ENCODE measurements at regions of chr19 and their contacts with region 1.

Region 1: GRCh38 chr19:50368649-50369570 is 3.5 kb upstream of the NAPSA start:
- DNase-seq: peak; percentile 92

Region 2: DNA sequence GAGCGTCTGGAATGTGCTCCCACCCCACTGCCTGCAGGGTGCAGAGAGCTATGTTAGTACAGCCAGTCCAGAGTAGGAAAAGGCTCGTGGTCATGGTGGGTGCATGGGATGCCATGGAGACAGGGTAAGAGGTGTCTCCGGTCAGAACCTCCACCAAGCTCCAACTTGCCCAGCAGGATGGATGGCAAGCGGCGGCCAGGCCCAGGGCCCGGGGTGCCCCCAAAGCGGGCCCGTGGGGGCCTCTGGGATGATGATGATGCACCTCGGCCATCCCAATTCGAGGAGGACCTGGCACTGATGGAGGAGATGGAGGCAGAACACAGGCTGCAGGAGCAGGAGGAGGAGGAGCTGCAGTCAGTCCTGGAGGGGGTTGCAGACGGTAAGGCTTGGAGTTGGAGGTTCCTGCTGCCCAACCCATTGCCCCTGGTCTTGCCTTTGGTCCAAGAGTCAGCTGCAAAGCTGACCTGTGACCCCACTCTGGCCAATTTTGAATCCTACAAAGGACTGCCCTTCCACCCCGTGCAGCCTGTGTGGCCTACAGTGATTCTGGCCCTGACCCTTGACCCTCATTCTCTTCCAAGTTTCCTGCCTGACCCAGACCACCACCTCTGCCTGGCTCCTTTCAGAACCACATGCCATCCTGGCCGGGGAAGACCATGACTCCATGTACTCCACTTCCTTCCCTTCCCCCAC is 29.9 kb after region 1 on chr19:
- intact Hi-C with region 1: no loop called
- DNase-seq: no peak

Region 3: DNA sequence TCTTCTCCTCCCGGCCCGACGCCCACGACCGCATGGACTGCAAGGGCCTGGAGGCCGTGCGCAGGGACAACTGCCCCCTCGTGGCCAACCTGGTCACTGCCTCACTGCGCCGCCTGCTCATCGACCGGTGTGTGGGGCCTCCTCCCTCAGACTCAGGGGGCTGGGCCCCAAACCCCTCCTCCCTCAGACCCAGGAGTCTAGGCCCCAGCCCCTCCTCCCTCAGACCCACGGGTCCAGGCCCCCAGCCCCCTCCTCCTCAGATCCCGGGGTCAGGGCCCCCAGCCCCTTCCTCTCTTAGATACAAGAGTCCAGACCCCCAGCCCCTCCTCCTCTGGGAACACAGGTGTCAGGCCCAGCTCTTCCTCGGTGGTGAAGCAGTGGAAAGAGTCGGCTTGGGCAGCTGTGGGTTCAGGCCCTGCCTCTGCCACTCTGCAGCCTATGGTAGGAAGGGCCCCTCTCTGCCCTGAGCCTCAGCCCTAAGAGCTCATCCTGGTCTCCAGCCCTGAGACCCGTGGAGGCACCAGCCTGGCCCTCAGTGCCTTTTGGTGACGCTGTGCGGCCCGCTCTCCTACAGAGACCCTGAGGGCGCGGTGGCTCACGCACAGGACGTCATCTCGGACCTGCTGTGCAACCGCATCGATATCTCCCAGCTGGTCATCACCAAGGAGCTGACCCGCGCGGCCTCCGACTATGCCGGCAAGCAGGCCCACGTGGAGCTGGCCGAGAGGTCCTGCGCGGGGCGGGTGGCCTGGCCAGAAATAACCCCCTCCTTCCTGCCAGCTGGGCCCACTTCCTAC is 46.2 kb after region 1 on chr19:
- intact Hi-C with region 1: loop called (anchors 2 kb)
- DNase-seq: peak; percentile 89

Region 4: GRCh38 chr19:50461066-50461875 is 92.4 kb after region 1 on chr19:
- intact Hi-C with region 1: loop called (anchors 2 kb)
- DNase-seq: no peak

Region 5: GRCh38 chr19:50556282-50557008 is 187.5 kb after region 1 on chr19:
- intact Hi-C with region 1: loop called (anchors 10 kb)
- DNase-seq: peak; percentile 87

Region 6: GRCh38 chr19:50777754-50778303 is 408.9 kb after region 1 on chr19:
- intact Hi-C with region 1: loop called (anchors 5 kb)
- DNase-seq: no peak

Region 7: DNA sequence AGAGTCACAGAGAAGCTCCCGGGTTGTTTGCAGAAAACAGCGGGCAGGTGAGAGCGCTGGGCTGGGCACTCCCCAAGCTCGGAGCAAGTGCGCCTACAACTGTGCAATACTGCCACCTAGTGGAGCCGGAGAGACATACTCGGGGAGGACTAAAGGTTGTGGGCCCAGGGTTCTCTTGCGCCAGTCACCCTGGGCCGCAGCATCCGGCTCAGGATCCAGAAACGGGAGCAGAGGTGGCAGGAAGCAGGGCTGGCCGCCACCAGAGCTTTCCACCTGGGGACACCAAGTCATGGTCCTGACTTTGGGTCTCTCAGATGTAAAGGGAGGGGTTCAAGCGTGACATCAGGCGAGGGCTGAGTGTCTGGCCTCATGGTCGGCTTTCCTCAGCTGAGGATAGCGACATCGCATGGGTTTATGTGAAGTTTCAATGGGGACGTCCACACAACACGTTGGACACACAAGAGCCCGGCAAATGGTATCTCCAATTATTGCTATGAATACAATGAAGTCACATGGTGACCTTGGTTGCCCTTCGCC is 553.5 kb after region 1 on chr19:
- intact Hi-C with region 1: loop called (anchors 5 kb)
- DNase-seq: peak; percentile 82